MCF 10A (cell line): ENCODE measurements at regions of chr4 and their contacts with region 1.

Region 1: DNA sequence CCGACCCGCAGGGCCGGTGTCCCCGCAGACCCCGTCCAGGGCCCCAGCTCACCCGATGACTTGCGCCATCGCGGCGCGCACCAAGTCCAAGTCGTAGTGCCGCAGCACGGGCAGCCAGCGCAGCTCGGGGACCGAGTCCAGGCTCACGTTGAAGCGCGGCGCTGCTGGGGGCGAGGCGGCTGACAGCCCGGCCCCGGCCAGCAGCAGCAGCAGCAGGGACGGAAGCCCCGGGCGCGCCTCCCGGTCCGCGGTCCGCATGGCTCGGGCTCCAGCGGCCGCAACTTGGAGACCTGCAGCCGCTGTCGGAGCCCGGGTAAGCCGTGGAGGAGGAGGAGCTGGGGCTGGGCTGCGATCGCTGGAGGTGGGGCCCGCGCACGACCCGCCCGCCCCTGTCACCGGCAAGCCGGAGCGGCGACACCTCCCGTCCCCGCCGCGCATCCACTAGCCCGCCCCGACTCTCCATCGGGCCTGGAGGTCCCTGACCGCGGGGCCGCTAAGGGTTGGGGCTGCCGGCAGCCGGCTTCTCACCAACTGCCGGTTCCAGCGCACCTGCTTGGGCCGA is at the start of gene NAAA:
- DNase-seq: peak; percentile 65
- H3K4me3 Mint-ChIP-seq: peak within 1 kb of the TSS; percentile 82
- H3K27ac Mint-ChIP-seq: peak within 1 kb of the TSS; percentile 12
- H3K4me1 Mint-ChIP-seq: no peaks in the 10 kb centered on the region
- H3K27me3 Mint-ChIP-seq: no peaks in the 10 kb centered on the region
- CTCF ChIP-seq: peak; percentile 24
- total RNA-seq, gene NAAA: 7.1 and 8.9 TPM in 2 replicates

Region 2: DNA sequence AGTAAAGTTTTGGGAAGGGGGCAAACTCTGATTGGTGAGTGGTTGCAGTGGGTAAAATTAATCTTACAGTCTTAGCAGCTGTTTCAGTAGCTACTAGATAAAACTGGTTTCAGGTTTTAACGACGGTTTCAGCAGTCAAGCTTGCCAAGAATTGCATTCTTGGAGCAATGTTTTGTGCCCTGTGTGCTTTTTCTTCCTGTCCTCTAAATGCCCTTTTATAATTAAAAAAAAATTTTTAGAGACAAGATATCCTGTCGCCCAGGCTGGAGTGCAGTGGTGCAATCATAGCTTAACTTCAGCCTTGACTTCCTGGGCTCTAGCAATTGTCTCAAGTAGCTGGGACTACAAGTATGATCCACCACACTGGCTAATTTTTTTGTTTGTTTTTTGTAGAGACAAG is 32.2 kb before region 1 on chr4:
- CTCF ChIA-PET with region 1: interaction called, 4 read pairs
- POLR2A ChIA-PET with region 1: no interaction called
- intact Hi-C with region 1: loop called (anchors 5 kb)
- DNase-seq: no peak
- H3K4me3 Mint-ChIP-seq: no peak overlapping the region
- H3K27ac Mint-ChIP-seq: no peak overlapping the region
- H3K4me1 Mint-ChIP-seq: peaks cover 6% of the 10 kb centered on the region
- H3K27me3 Mint-ChIP-seq: no peaks in the 10 kb centered on the region
- CTCF ChIP-seq: no peak

Region 3: GRCh38 chr4:75968084-75968483 is 27.3 kb after region 1 on chr4:
- CTCF ChIA-PET with region 1: no interaction called
- POLR2A ChIA-PET with region 1: no interaction called
- intact Hi-C with region 1: no loop called
- DNase-seq: no peak
- H3K4me3 Mint-ChIP-seq: no peak overlapping the region
- H3K27ac Mint-ChIP-seq: no peak overlapping the region
- H3K4me1 Mint-ChIP-seq: no peaks in the 10 kb centered on the region
- H3K27me3 Mint-ChIP-seq: no peaks in the 10 kb centered on the region
- CTCF ChIP-seq: no peak